Heart right ventricle (tissue), 16 donors: ENCODE measurements at regions of chr22 and their contacts with region 1.

Region 1: DNA sequence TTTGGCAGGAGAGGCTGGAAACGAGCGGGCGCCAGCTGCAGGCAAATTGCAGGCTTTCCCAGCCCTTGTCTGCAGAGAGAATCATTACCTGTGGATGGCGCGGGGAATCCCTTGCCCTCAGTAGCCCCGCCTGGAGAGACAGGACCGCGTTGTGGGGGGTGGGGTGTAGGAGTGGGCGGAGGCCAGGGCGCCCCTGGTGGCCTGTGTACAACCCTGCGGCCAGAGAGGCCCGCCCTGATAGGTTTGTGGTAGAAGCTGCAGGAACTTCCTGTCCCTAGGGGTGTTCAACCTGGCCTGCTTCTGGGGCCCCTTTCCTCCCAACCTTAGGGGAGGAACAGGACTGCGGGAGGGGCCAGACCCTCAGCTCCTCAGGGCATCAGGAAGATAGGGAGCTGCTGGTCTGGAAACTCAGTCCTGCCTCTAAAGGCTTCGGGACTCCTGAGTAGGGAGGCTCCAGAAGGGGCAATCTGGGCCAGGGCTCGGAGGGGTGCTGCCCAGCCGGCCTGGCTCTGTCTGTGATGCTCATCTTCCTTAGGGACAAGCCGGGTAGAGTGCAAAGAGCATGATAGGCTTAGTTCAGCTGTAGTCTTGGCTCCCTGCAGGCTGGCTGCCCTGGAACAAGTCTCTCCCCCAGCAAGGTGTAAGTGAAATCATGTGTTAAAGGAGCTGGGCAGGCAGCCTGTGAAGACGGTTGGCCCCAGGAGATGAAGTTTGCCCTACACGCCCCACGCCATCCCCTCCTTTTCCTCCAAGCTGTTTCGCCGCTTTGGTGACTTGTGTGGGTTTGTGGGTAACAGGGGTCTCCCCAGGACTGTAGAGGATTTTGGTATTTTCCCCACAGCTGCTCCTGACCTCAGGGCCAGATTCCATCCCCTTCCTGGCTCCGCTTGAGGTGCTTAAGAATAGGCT is 24.1 kb upstream of the SUSD2 start:
- DNase-seq: peak; percentile 83 to 84
- ATAC-seq: peak; percentile 77 to 89 (median 86)
- H3K4me3 ChIP-seq: peak overlapping the region; percentile 57 to 90 (median 81)
- H3K27ac ChIP-seq: peak overlapping the region in 9 of 10 donors; percentile 76 to 93 (median 90)
- H3K4me1 ChIP-seq: peaks cover 30 to 75% (median 57%) of the 10 kb centered on the region in 9 donors
- H3K27me3 ChIP-seq: no peaks in the 10 kb centered on the region
- CTCF ChIP-seq: peak; percentile 74 to 93 (median 84)

Region 2: GRCh38 chr22:24005201-24005600 is 152.0 kb before region 1 on chr22 and contains the start of gene GSTT4:
- intact Hi-C with region 1: loop called in 2 of 10 experiments (anchors 10 kb)
- DNase-seq: peak; percentile 80 to 86
- ATAC-seq: peak; percentile 88 to 98 (median 94)
- H3K4me3 ChIP-seq: peak within 1 kb of the TSS in 1 of 10 donors; percentile 5
- H3K27ac ChIP-seq: peak within 1 kb of the TSS in 8 of 10 donors; percentile 39 to 74 (median 61)
- H3K4me1 ChIP-seq: peaks cover 0 to 18% (median 11%) of the 10 kb centered on the region in 9 donors
- H3K27me3 ChIP-seq: no peaks in the 10 kb centered on the region
- CTCF ChIP-seq: no peak
- total RNA-seq, gene GSTT4: not detected